CD4-positive, alpha-beta T cell (primary cell): ENCODE measurements at regions of chr1 and their contacts with region 1.

Region 1: DNA sequence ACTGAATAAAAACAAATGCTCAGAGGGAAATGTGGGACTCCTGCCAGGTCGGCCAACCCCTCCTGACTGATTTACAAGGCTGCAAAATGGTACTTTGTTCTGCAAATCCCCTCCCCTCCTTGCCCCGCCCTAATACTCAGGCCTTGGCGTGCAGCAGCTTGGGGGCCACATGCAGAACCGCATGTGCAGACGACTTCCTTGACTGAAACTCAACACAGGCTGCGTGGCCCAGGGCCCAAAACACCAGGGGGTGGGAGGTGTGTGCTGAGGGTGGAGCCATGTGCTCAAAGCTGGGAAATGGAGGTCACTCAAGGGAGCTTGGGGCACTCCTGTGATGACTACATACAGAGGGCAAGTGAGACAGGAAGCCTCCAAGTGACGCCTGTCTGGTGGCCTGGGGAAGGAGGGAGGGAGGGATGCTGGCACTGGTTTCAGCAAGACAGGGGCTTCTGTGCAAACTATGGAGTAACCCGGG is 87.2 kb downstream of the MRPL37 start:
- DNase-seq: peak; percentile 32 to 81 (median 64)
- ATAC-seq: peak; percentile 76
- H3K4me3 ChIP-seq: no peak overlapping the region
- H3K4me3 Mint-ChIP-seq: peak overlapping the region; percentile 83
- H3K27ac ChIP-seq: peak overlapping the region; percentile 28 to 62
- H3K27ac Mint-ChIP-seq: peak overlapping the region; percentile 90
- H3K4me1 ChIP-seq: peaks cover 92% of the 10 kb centered on the region
- H3K4me1 Mint-ChIP-seq: peaks cover 91% of the 10 kb centered on the region
- H3K27me3 ChIP-seq: no peaks in the 10 kb centered on the region
- H3K27me3 Mint-ChIP-seq: no peaks in the 10 kb centered on the region
- CTCF ChIP-seq: no peak

Region 2: GRCh38 chr1:54199765-54200518 is 87.3 kb before region 1 on chr1 and contains the starts of genes CYB5RL and MRPL37:
- CTCF ChIA-PET with region 1: no interaction called
- POLR2A ChIA-PET with region 1: interaction called, 5 read pairs
- intact Hi-C with region 1: loop called in 1 of 2 experiments (anchors 10 kb)
- DNase-seq: peak; percentile 78 to 96 (median 84)
- ATAC-seq: peak; percentile 98
- H3K4me3 ChIP-seq: peak within 1 kb of the TSS; percentile 96
- H3K4me3 Mint-ChIP-seq: peak within 1 kb of the TSS; percentile 92
- H3K27ac ChIP-seq: peak within 1 kb of the TSS; percentile 22 to 37
- H3K27ac Mint-ChIP-seq: peak within 1 kb of the TSS; percentile 87
- H3K4me1 ChIP-seq: peaks cover 25% of the 10 kb centered on the region
- H3K4me1 Mint-ChIP-seq: peaks cover 34% of the 10 kb centered on the region
- H3K27me3 ChIP-seq: no peaks in the 10 kb centered on the region
- H3K27me3 Mint-ChIP-seq: no peaks in the 10 kb centered on the region
- CTCF ChIP-seq: no peak
- total RNA-seq, gene CYB5RL: 2.0 to 2.1 TPM
- total RNA-seq, gene MRPL37: 24.0 to 24.4 TPM

Region 3: GRCh38 chr1:54355931-54356679 is 68.9 kb after region 1 on chr1:
- CTCF ChIA-PET with region 1: interaction called, 3 read pairs
- POLR2A ChIA-PET with region 1: interaction called, 4 read pairs
- intact Hi-C with region 1: loop called (anchors 2 to 5 kb)
- DNase-seq: peak in 4 of 14 experiments; percentile 7 to 46 (median 42)
- ATAC-seq: peak; percentile 8
- H3K4me3 ChIP-seq: peak overlapping the region; percentile 42
- H3K4me3 Mint-ChIP-seq: peak overlapping the region; percentile 91
- H3K27ac ChIP-seq: peak overlapping the region in 1 of 2 donors; percentile 5
- H3K27ac Mint-ChIP-seq: peak overlapping the region; percentile 94
- H3K4me1 ChIP-seq: peaks cover 57% of the 10 kb centered on the region
- H3K4me1 Mint-ChIP-seq: peaks cover 93% of the 10 kb centered on the region
- H3K27me3 ChIP-seq: no peaks in the 10 kb centered on the region
- H3K27me3 Mint-ChIP-seq: no peaks in the 10 kb centered on the region
- CTCF ChIP-seq: no peak